RWPE1 (cell line): ENCODE measurements at regions of chr20 and their contacts with region 1.

Region 1: DNA sequence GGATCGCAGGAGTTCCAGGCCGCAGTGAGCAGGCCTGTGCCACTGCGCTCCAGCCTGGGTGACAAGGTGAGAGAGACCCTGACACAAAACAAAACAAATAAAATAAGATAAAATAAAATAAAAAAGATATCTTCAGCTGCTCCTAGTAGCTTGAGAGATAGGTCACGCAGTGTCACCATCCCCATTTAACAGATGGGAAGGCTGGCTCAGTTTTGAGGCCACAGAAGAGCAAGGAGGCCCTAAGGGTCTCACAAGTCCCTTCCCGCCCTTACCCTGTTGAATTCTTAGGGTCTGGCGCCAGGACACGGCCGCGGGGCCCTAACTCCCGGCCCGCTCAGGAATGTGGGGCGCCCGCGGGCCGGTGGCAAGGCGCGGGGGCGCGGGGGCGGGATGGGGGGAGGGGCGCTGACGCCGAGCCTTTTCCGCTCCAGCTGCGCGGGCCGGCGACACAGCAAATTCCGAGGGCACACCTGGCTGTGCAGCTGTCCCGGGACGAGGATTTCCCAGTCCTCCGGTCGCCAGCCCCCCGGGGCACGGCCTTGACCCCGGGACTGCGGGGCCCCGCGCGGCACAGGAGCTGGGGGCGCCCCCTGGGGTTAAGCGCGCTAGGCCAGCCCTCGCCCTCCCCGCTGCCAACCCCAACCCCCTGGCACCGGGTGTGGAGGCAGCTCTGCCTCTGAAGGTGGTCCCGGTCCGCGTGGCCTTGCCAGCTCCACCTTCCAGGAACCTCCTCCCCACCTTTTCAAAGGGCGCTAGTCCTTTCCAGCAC is 10.3 kb upstream of the R3HDML start:
- DNase-seq: no peak
- H3K27ac ChIP-seq: no peak overlapping the region
- CTCF ChIP-seq: no peak

Region 2: GRCh38 chr20:44310664-44311639 is 15.6 kb before region 1 on chr20 and contains the start of gene FITM2:
- CTCF ChIA-PET with region 1: interaction called, 17 read pairs
- POLR2A ChIA-PET with region 1: no interaction called
- DNase-seq: peak; percentile 100
- H3K27ac ChIP-seq: peak within 1 kb of the TSS; percentile 67
- CTCF ChIP-seq: peak; percentile 100

Region 3: GRCh38 chr20:44342248-44342647 is 15.7 kb after region 1 on chr20:
- CTCF ChIA-PET with region 1: no interaction called
- POLR2A ChIA-PET with region 1: interaction called, 13 read pairs
- DNase-seq: no peak
- H3K27ac ChIP-seq: no peak overlapping the region
- CTCF ChIP-seq: no peak